ENCODE measurements at regions of chr3 and their contacts with region 1.

Region 1: DNA sequence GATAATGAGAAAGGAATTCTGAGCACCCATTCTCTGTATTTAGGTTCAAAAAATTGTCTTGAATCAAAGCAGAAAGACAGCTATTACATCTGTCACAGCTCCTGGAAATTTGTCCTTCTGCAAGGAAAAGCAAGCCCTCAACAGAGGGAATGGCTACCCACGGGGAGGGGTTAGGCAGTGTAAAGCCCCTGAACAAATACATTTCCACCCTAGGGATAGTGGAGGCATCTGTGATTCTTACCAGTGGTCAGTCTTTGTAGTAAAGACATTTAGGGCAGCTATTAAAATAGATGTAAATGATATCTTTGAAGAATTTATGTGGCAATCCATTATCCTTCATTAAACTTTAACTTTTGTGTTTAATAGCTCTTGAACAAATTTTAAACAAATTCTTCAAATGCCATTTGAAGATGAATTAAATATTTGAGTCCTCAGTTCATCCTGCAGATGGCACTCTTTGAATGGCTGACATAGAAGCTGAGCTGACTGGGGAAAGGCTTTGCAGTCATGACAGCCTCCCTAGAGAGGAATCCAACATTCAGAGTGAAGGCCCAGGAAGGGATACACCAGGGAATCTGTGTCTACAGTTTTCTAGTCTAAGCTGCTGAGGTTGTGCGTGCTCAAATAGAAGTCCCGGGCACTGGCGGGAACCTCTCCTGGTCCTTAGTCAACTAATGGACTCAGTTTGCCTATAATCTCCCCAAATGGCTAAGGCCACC is 359.7 kb upstream of the ROPN1 start:
- DNase-seq: peak; percentile 64
- H3K4me3 Mint-ChIP-seq: no peak overlapping the region
- H3K27ac Mint-ChIP-seq: no peak overlapping the region
- H3K4me1 Mint-ChIP-seq: no peaks in the 10 kb centered on the region
- H3K27me3 Mint-ChIP-seq: peaks cover 81% of the 10 kb centered on the region
- CTCF ChIP-seq: peak; percentile 65

Region 2: GRCh38 chr3:124202754-124203153 is 148.8 kb before region 1 on chr3:
- CTCF ChIA-PET with region 1: no interaction called
- POLR2A ChIA-PET with region 1: no interaction called
- intact Hi-C with region 1: no loop called
- DNase-seq: no peak
- H3K4me3 Mint-ChIP-seq: no peak overlapping the region
- H3K27ac Mint-ChIP-seq: no peak overlapping the region
- H3K4me1 Mint-ChIP-seq: no peaks in the 10 kb centered on the region
- H3K27me3 Mint-ChIP-seq: peaks cover 94% of the 10 kb centered on the region
- CTCF ChIP-seq: no peak

Region 3: GRCh38 chr3:124217542-124217941 is 134.0 kb before region 1 on chr3:
- CTCF ChIA-PET with region 1: no interaction called
- POLR2A ChIA-PET with region 1: no interaction called
- intact Hi-C with region 1: no loop called
- DNase-seq: peak; percentile 85
- H3K4me3 Mint-ChIP-seq: no peak overlapping the region
- H3K27ac Mint-ChIP-seq: no peak overlapping the region
- H3K4me1 Mint-ChIP-seq: no peaks in the 10 kb centered on the region
- H3K27me3 Mint-ChIP-seq: peaks cover 65% of the 10 kb centered on the region
- CTCF ChIP-seq: no peak

Region 4: DNA sequence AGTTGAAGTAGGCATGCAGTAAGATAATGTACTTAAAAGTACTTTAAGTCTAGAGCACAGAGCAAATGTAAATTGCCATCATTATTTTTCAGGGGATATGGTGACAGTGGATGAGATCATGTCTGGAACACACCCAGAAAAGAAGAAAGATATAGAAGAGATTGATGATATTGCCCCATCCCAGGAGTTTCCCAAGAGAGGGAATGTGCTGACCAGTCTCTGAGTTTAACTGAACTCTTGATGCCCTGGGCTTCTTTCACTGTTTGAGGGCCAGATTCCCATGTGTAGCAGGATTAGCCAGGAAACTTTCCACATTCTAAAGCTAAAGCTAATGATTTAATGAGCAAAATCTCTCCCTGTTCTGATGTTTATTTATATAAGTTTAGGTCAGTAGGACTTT is 11.9 kb after region 1 on chr3:
- CTCF ChIA-PET with region 1: interaction called, 20 read pairs
- POLR2A ChIA-PET with region 1: no interaction called
- intact Hi-C with region 1: no loop called
- DNase-seq: peak; percentile 27
- H3K4me3 Mint-ChIP-seq: no peak overlapping the region
- H3K27ac Mint-ChIP-seq: no peak overlapping the region
- H3K4me1 Mint-ChIP-seq: no peaks in the 10 kb centered on the region
- H3K27me3 Mint-ChIP-seq: peaks cover 58% of the 10 kb centered on the region
- CTCF ChIP-seq: no peak

Region 5: DNA sequence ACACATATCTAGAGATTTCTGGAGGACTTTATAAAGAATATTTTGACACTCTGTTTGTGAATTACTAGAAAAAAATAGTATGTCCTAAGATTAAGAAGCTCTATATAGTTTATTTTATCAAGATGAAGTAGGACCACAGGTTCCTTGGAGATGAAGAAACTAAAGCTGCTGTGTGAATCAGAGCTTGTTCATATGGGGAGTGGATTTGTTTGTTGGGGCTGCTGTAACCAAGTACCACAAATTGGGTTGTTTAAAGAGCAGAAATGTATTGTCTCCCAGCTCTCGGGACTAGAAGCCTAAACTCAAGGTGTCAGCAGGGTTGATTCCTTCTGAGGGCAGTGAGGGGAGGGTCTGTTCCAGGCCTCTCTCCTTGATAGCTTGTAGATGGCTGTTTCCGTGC is 108.1 kb after region 1 on chr3:
- CTCF ChIA-PET with region 1: interaction called, 279 read pairs
- POLR2A ChIA-PET with region 1: no interaction called
- intact Hi-C with region 1: no loop called
- DNase-seq: no peak
- H3K4me3 Mint-ChIP-seq: no peak overlapping the region
- H3K27ac Mint-ChIP-seq: no peak overlapping the region
- H3K4me1 Mint-ChIP-seq: no peaks in the 10 kb centered on the region
- H3K27me3 Mint-ChIP-seq: peaks cover 96% of the 10 kb centered on the region
- CTCF ChIP-seq: no peak

Region 6: DNA sequence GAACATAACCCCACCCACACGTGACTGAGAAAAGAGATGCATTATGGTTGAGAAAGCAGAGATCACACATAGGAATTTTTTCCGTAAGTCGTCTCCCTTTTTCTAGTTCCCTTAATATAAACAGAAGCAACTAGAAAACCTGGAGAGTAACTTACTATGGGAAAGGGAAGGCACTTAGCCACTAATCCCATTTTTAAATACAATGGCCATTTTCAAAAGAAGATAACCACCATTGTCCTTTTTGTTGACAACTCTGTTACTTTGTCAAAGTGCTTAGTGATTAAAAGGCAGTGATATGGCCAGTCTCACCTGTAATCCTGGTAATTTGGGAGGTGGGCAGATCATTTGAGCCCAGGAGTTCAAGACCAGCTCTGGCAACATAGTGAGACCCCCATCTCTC is 194.3 kb after region 1 on chr3:
- CTCF ChIA-PET with region 1: interaction called, 46 read pairs
- POLR2A ChIA-PET with region 1: no interaction called
- intact Hi-C with region 1: loop called (anchors 1 kb)
- DNase-seq: no peak
- H3K4me3 Mint-ChIP-seq: no peak overlapping the region
- H3K27ac Mint-ChIP-seq: no peak overlapping the region
- H3K4me1 Mint-ChIP-seq: no peaks in the 10 kb centered on the region
- H3K27me3 Mint-ChIP-seq: peaks cover 73% of the 10 kb centered on the region
- CTCF ChIP-seq: no peak

Region 7: DNA sequence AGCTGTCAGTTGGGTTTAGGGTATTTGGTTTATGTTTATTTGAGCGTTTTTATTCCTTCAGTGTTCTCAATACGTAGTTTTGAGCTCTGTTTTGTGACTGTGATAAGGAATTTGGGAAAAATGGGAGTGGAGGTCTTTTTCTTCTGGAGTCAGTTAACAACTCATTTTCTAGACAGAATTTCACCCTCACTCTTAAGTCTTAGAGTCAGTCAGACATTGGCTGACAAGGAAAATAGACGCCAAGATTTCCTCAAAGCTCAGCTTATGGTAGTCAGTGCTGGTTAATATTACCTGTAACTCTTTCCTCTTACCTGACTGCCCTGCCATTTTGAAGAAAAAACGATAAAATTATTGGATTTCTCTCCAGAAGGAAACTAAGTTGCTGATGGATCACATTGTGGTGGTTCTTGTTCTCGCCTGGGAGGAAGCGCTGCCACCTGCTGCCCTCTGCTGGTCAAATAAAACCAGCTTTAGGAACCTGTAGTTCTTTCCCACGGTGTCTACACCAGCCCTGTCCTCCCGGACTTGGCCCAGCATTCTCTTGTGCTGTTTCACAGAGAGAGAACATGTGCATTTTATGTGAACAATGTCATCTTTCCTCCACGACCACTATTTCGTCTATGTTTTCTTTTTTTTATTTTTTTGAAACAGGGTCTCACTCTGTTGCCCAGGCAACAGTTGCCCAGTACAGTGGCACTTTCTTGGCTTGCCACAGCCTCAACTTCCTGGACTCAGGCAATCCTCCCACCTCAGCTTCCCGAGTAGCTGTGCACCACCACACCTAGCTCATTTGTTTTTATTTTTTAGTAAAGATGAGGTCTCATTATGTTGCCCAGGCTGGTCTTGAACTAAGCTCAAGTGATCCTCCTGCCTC is 337.2 kb after region 1 on chr3:
- CTCF ChIA-PET with region 1: interaction called, 4 read pairs
- POLR2A ChIA-PET with region 1: no interaction called
- intact Hi-C with region 1: loop called (anchors 10 kb)
- DNase-seq: peak; percentile 79
- H3K4me3 Mint-ChIP-seq: no peak overlapping the region
- H3K27ac Mint-ChIP-seq: no peak overlapping the region
- H3K4me1 Mint-ChIP-seq: peaks cover 4% of the 10 kb centered on the region
- H3K27me3 Mint-ChIP-seq: no peaks in the 10 kb centered on the region
- CTCF ChIP-seq: peak; percentile 72

Measured in MCF 10A (cell line).